Left ventricle myocardium superior (tissue), 1 donor: ENCODE measurements at regions of chr17 and their contacts with region 1.

Region 1: DNA sequence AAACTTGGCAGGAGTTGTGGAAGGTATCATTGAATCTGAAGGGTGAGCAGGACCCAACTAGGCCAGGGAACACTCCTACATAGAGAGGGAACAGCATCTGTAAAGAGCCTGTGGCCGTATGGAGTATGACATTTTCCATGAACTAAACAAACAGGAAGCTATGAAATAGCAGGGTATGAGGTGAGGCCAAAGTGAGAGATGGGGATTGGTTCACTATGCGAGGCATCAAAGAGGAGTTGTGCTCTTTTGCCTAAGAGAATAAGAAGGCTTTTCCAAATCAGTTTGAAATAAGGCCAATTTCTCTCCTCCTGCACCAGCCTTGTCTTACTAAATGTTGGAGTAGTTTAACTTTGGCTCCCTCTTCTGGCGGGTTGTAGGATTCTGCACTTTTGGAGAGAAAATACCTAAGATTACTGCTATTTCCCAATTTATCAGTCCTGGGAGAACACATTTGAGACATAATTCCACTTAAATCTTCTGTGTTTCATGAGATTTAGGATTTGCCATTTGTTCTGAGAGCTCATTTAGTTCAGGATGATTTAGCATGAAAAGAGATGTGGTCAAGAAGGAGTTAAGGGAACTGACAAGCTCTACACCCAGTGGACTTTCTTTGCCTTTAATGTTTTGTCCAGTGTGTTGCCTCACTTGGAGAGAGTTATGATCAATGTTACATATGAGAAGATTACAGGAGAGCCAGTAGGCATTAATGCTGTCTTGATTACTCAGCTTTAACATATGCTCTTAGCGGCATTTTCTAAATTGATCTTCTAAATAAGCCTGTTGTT is 55.4 kb downstream of the TNRC6C start:
- DNase-seq: no peak
- ATAC-seq: peak; percentile 75

Region 2: GRCh38 chr17:77542551-77543490 is 471.1 kb before region 1 on chr17:
- intact Hi-C with region 1: loop called (anchors 5 kb)
- DNase-seq: peak; percentile 84
- ATAC-seq: peak; percentile 95

Region 3: GRCh38 chr17:77772461-77772897 is 241.4 kb before region 1 on chr17:
- intact Hi-C with region 1: loop called (anchors 10 kb)
- DNase-seq: peak; percentile 82
- ATAC-seq: peak; percentile 92

Region 4: GRCh38 chr17:78089576-78090281 is 75.9 kb after region 1 on chr17:
- intact Hi-C with region 1: no loop called
- DNase-seq: no peak
- ATAC-seq: peak; percentile 34